T-cell (primary cell): ENCODE measurements at regions of chr2 and their contacts with region 1.

Region 1: DNA sequence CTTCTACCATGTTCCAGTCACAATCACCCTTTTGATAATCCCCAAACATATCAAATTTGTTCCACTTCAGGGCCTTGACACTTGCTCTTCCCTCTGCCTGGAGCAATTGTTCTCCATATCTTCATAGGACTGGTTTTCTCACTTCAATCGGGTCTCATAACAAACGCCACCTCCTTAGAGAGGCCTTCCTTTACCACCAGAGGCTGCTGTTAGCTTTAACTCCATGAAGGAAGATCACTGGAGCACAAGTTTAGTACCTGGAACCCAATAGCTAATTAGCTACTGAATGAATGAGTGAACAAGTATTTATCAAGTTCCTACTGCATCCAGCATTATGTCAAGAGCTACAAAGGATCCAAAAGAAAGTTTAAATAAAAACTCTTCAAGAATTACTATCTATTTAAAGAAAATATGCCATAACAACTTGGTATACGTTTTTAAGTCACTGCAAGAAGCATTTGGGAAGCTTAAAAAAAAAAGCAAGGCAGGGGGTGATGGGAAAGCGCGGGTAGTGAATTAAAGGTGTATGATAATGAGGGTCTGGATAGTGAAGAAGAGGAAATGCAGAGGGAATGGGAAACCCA is 58.8 kb downstream of the BAZ2B start:
- DNase-seq: peak in 1 of 35 experiments; percentile 1
- ATAC-seq: no peak
- H3K4me3 ChIP-seq: no peak overlapping the region
- H3K4me3 Mint-ChIP-seq: no peak overlapping the region
- H3K27ac ChIP-seq: no peak overlapping the region
- H3K27ac Mint-ChIP-seq: no peak overlapping the region
- H3K4me1 ChIP-seq: no peaks in the 10 kb centered on the region
- H3K4me1 Mint-ChIP-seq: no peaks in the 10 kb centered on the region
- H3K27me3 ChIP-seq: no peaks in the 10 kb centered on the region
- H3K27me3 Mint-ChIP-seq: no peaks in the 10 kb centered on the region

Region 2: GRCh38 chr2:159531475-159531874 is 26.1 kb before region 1 on chr2:
- CTCF ChIA-PET with region 1: no interaction called
- POLR2A ChIA-PET with region 1: no interaction called
- DNase-seq: no peak
- ATAC-seq: no peak
- H3K4me3 ChIP-seq: no peak overlapping the region
- H3K4me3 Mint-ChIP-seq: no peak overlapping the region
- H3K27ac ChIP-seq: no peak overlapping the region
- H3K27ac Mint-ChIP-seq: no peak overlapping the region
- H3K4me1 ChIP-seq: no peaks in the 10 kb centered on the region
- H3K4me1 Mint-ChIP-seq: no peaks in the 10 kb centered on the region
- H3K27me3 ChIP-seq: no peaks in the 10 kb centered on the region
- H3K27me3 Mint-ChIP-seq: no peaks in the 10 kb centered on the region

Region 3: GRCh38 chr2:161238560-161239325 is 1681.2 kb after region 1 on chr2:
- CTCF ChIA-PET with region 1: interaction called in 1 of 2 experiments, 10 read pairs
- POLR2A ChIA-PET with region 1: no interaction called
- DNase-seq: peak in 34 of 35 experiments; percentile 33 to 71 (median 55)
- ATAC-seq: peak; percentile 70 to 77 (median 73)
- H3K4me3 ChIP-seq: peak overlapping the region; percentile 62 to 77
- H3K4me3 Mint-ChIP-seq: peak overlapping the region; percentile 88 to 92 (median 91)
- H3K27ac ChIP-seq: peak overlapping the region; percentile 39
- H3K27ac Mint-ChIP-seq: peak overlapping the region; percentile 75 to 84
- H3K4me1 ChIP-seq: peaks cover 13 to 26% of the 10 kb centered on the region in 2 experiments
- H3K4me1 Mint-ChIP-seq: peaks cover 20 to 61% (median 56%) of the 10 kb centered on the region in 3 donors
- H3K27me3 ChIP-seq: no peaks in the 10 kb centered on the region
- H3K27me3 Mint-ChIP-seq: no peaks in the 10 kb centered on the region